ENCODE measurements at regions of chr4 and their contacts with region 1.

Region 1: DNA sequence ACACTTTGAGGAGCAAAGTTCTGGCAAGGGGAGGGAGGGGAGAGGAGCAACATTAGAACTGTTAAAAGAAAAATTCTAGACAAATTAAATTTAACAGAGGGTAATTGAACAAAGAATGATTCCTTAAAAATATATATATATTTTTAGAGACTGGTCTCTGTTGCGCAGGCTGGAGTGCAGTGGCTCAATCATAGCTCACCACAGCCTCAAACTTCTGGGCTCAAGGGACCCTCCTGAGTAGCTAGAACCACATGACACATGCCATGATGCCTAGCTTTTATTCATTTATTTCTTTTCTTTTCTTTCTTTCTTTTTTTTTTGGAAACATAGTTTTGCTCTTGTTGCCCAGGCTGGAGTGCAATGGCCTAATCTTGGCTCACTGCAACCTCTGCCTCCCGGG is 19.1 kb upstream of the SPINK2 start:
- DNase-seq: no peak
- H3K4me3 ChIP-seq: no peak overlapping the region
- H3K27ac ChIP-seq: no peak overlapping the region
- H3K4me1 ChIP-seq: no peaks in the 10 kb centered on the region
- H3K27me3 ChIP-seq: no peaks in the 10 kb centered on the region
- CTCF ChIP-seq: no peak
- POLR2A ChIP-seq: no peak

Region 2: GRCh38 chr4:56424697-56425514 is 415.7 kb before region 1 on chr4:
- CTCF ChIA-PET with region 1: interaction called, 12 read pairs
- POLR2A ChIA-PET with region 1: no interaction called
- dilution Hi-C with region 1: no loop called
- intact Hi-C with region 1: no loop called
- DNase-seq: peak; percentile 61
- H3K4me3 ChIP-seq: no peak overlapping the region
- H3K27ac ChIP-seq: no peak overlapping the region
- H3K4me1 ChIP-seq: peaks cover 6% of the 10 kb centered on the region
- H3K27me3 ChIP-seq: no peaks in the 10 kb centered on the region
- CTCF ChIP-seq: peak; percentile 40 to 45
- POLR2A ChIP-seq: no peak

Region 3: DNA sequence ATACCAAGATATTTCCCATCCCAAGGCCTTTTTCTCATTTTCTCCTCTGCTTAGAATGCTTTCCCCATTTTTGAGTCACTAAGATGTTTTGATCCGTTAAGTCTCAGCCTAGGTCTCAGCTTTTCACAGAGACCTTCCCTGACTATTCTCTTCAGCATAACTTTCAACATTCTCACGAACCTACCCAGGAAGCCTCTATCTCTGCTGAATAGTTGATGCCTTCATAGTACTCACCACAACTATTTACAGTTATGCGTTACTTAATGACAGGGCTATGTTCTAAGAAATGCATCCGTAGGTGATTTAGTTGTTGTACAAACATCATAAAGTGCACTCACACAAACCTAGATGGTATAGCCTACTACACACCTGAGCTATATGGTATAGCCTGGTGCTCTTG is 270.5 kb before region 1 on chr4:
- CTCF ChIA-PET with region 1: interaction called, 4 read pairs
- POLR2A ChIA-PET with region 1: no interaction called
- dilution Hi-C with region 1: no loop called
- intact Hi-C with region 1: loop called (anchors 2 kb)
- DNase-seq: no peak
- H3K4me3 ChIP-seq: no peak overlapping the region
- H3K27ac ChIP-seq: no peak overlapping the region
- H3K4me1 ChIP-seq: no peaks in the 10 kb centered on the region
- H3K27me3 ChIP-seq: no peaks in the 10 kb centered on the region
- CTCF ChIP-seq: no peak
- POLR2A ChIP-seq: no peak

Region 4: GRCh38 chr4:56626963-56627362 is 213.6 kb before region 1 on chr4:
- CTCF ChIA-PET with region 1: interaction called, 13 read pairs
- POLR2A ChIA-PET with region 1: no interaction called
- dilution Hi-C with region 1: no loop called
- intact Hi-C with region 1: no loop called
- DNase-seq: peak; percentile 4
- H3K4me3 ChIP-seq: no peak overlapping the region
- H3K27ac ChIP-seq: no peak overlapping the region
- H3K4me1 ChIP-seq: no peaks in the 10 kb centered on the region
- H3K27me3 ChIP-seq: no peaks in the 10 kb centered on the region
- CTCF ChIP-seq: peak in 1 of 2 donors; percentile 17
- POLR2A ChIP-seq: no peak

Region 5: GRCh38 chr4:56910172-56910967 is 69.8 kb after region 1 on chr4:
- CTCF ChIA-PET with region 1: no interaction called
- POLR2A ChIA-PET with region 1: no interaction called
- dilution Hi-C with region 1: no loop called
- intact Hi-C with region 1: no loop called
- DNase-seq: no peak
- H3K4me3 ChIP-seq: peak overlapping the region in 2 of 3 experiments; percentile 96 to 98
- H3K27ac ChIP-seq: no peak overlapping the region
- H3K4me1 ChIP-seq: peaks cover 17% of the 10 kb centered on the region
- H3K27me3 ChIP-seq: peaks cover 4 to 6% of the 10 kb centered on the region in 2 experiments
- CTCF ChIP-seq: no peak
- POLR2A ChIP-seq: no peak

Measured in endothelial cell of umbilical vein (primary cell).